Activated CD8-positive, alpha-beta memory T cell treated with anti-CD3 and anti-CD28 coated beads, Interleukin-2, amount 10 ng/mL, durations not matched to agents 7 days and 5 days (primary cell): ENCODE measurements at regions of chr10 and their contacts with region 1.

Region 1: GRCh38 chr10:61903221-61903927 is 1.9 kb downstream of the ARID5B start:
- DNase-seq: peak; percentile 90
- ATAC-seq: peak; percentile 66
- H3K4me3 Mint-ChIP-seq: peak overlapping the region; percentile 98
- H3K27ac Mint-ChIP-seq: peak overlapping the region; percentile 99
- H3K4me1 Mint-ChIP-seq: peaks cover 36% of the 10 kb centered on the region
- H3K27me3 Mint-ChIP-seq: no peaks in the 10 kb centered on the region

Region 2: DNA sequence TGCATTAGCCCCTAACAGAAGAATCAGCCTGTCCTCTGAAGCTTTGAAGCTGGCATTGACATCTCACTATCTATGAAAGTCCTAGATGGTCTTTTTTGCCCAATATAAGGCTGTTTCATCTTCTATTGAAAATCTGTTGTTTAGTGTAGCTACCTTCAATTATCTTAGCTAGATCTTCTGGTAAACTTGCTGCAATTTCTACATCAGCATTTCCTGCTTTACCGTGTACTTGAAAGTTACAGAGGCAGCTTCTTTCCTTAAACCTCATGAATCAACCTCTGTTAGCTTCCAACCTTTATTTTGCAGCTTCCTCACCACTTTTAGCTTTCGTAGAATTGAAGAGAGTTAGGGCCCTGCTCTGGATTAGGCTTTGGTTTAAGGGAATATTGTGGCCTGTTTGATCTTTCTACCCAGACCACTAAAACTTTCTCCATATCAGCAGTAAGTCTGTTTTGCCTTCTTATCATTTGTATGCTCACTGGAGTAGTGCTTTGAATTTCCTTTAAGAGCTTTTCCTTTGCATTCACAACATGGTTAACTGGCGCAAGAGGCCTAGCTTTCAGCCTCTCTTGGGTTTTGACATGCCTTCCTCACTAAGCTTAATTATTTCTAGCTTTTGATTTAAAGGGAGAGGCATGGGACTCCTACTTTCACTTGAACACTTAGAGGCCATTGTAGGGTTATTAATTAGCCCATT is 30.6 kb after region 1 on chr10:
- CTCF ChIA-PET with region 1: interaction called, 11 read pairs
- DNase-seq: no peak
- ATAC-seq: peak; percentile 54
- H3K4me3 Mint-ChIP-seq: peak overlapping the region; percentile 27
- H3K27ac Mint-ChIP-seq: peak overlapping the region; percentile 85
- H3K4me1 Mint-ChIP-seq: peaks cover 57% of the 10 kb centered on the region
- H3K27me3 Mint-ChIP-seq: no peaks in the 10 kb centered on the region

Region 3: DNA sequence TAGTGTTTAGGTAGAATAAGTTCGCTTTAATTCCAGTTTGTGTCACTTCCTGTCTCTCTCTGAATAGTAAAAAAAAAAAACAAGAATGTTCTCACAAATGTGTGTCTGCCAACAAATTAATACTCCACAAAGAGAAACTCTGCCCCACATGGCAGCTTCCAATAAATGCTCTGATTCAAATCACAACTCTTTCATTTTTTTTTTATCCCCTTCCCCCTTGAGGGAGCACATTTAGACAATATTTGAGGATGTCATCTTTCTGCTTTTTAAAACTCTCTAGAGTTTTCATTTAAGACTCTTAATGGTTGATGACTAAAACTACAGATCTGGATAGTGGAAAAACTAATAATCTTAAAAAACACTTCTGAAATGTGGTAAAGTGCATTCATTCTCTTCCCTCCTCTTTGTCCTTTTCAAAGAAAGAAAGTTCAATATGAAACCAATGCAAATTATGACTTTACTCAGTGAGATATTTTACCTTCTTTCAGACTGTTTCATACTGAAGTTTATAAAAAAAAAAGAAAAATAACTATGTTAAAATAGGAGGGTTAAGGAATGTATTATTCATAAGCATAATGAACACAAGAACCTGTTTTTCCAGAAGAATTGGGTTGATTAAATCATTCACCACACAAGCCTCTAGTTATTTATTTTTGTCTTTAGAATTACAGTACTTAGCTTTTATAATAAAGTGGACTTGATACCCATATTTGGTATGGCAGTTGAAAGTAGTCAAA is 40.5 kb after region 1 on chr10:
- CTCF ChIA-PET with region 1: interaction called, 13 read pairs
- DNase-seq: no peak
- ATAC-seq: peak; percentile 50
- H3K4me3 Mint-ChIP-seq: peak overlapping the region; percentile 73
- H3K27ac Mint-ChIP-seq: peak overlapping the region; percentile 98
- H3K4me1 Mint-ChIP-seq: peaks cover 57% of the 10 kb centered on the region
- H3K27me3 Mint-ChIP-seq: no peaks in the 10 kb centered on the region

Region 4: DNA sequence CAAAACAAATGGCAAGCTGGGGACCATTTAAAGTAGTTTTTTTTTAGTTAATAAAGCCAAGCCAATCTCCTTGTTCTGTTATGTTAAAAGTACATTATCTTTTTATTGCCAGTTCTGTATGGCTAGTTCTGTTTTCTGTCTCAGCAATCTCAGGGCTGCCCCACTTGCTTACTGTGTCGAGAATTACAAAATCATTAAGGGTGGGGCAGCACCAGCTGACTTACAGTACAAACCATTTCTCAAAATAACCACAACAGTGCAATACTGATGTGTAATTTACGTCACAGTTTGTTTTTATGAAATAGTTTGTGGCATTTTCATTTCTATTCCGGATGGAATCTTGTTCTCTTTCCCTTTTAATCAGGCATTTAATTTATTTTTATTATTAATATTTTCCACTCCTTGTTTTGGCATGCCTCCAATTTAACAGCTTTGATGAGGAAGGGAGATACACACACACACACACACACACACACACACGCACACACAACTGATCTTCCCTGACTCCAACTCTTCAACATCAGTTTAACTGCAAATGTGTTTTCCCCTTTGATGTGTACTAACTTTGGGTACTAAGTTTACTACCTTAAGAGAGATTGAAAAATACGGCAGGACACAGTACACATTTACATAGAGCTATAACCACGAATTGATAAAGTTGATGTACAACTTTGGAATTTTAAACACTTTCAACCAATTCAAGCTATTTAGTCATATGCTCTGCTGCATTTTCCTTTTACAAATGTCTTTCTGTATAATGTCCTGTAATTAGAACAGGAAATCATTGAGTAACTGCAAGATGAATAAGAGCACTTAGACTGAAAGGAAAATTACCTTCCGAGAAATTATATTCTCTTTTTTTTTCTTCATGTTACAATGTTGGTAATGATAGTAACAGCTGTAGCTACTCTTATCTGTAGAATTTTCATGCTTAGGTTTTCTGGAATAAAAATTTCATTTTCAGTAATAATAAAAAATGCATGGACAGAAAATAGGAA is 89.6 kb after region 1 on chr10:
- CTCF ChIA-PET with region 1: interaction called, 16 read pairs
- DNase-seq: peak; percentile 78
- ATAC-seq: peak; percentile 69
- H3K4me3 Mint-ChIP-seq: peak overlapping the region; percentile 80
- H3K27ac Mint-ChIP-seq: peak overlapping the region; percentile 98
- H3K4me1 Mint-ChIP-seq: peaks cover 69% of the 10 kb centered on the region
- H3K27me3 Mint-ChIP-seq: no peaks in the 10 kb centered on the region

Region 5: DNA sequence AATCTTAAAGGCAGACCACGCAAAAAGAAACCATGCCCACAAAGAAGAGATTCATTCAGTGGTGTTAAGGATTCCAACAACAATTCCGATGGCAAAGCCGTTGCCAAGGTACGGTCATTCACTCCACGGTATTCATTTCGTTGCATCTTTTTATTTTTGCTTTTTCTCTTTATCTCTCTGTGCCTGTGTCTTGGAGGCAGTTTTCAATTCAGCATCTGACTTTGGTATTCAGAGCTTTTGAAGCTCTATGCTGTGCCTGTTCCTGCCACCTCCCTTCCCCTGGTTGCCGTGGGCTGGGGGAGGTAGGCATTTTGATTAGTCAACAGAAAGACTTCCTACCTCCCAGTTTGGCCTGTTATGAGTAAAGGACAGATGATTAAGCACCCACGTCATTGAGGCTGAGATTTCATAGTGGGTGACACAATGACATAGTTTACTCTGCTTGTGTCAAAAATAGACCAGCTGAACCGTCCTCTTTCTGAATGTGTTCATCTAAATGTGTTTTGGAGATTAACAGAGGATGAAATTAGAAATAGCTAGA is 147.6 kb after region 1 on chr10:
- CTCF ChIA-PET with region 1: interaction called, 17 read pairs
- DNase-seq: peak; percentile 92
- ATAC-seq: peak; percentile 60
- H3K4me3 Mint-ChIP-seq: peak overlapping the region; percentile 83
- H3K27ac Mint-ChIP-seq: peak overlapping the region; percentile 99
- H3K4me1 Mint-ChIP-seq: peaks cover 93% of the 10 kb centered on the region
- H3K27me3 Mint-ChIP-seq: no peaks in the 10 kb centered on the region

Region 6: GRCh38 chr10:62244780-62245467 is 341.6 kb after region 1 on chr10:
- CTCF ChIA-PET with region 1: interaction called, 37 read pairs
- DNase-seq: peak; percentile 74
- ATAC-seq: peak; percentile 82
- H3K4me3 Mint-ChIP-seq: peak overlapping the region; percentile 42
- H3K27ac Mint-ChIP-seq: peak overlapping the region; percentile 82
- H3K4me1 Mint-ChIP-seq: peaks cover 33% of the 10 kb centered on the region
- H3K27me3 Mint-ChIP-seq: no peaks in the 10 kb centered on the region